ENCODE measurements at regions of chr1 and their contacts with region 1.

Region 1: DNA sequence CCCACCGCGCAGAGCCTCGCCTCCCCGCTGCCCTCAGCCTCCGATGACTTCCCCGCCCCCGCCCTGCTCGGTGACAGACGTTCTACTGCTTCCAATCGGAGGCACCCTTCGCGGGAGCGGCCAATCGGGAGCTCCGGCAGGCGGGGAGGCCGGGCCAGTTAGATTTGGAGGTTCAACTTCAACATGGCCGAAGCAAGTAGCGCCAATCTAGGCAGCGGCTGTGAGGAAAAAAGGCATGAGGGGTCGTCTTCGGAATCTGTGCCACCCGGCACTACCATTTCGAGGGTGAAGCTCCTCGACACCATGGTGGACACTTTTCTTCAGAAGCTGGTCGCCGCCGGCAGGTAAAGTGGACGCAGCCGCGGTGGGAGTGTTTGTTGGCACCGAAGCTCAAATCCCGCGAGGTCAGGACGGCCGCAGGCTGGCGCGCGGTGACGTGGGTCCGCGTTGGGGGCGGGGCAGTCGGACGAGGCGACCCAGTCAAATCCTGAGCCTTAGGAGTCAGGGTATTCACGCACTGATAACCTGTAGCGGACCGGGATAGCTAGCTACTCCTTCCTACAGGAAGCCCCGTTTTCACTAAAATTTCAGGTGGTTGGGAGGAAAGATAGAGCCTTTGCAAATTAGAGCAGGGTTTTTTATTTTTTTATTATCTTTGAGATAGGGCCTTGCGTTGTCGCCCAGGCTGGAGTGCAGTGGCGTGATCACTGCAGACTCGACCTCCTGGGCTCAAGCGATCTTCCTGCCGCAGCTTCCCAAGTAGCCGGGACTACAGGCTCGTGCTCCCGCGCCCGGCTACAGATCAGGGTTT is at the start of gene PMF1:
- DNase-seq: peak; percentile 98
- ATAC-seq: peak; percentile 97
- H3K4me3 Mint-ChIP-seq: peak within 1 kb of the TSS; percentile 96
- H3K27ac Mint-ChIP-seq: peak within 1 kb of the TSS; percentile 98
- H3K4me1 Mint-ChIP-seq: peaks cover 30% of the 10 kb centered on the region
- H3K27me3 Mint-ChIP-seq: no peaks in the 10 kb centered on the region
- total RNA-seq, gene PMF1: 66.2 to 71.2 TPM

Region 2: GRCh38 chr1:156146020-156146768 is 66.8 kb before region 1 on chr1:
- POLR2A ChIA-PET with region 1: interaction called, 79 read pairs
- DNase-seq: peak; percentile 49
- ATAC-seq: peak; percentile 82
- H3K4me3 Mint-ChIP-seq: peak overlapping the region; percentile 83
- H3K27ac Mint-ChIP-seq: peak overlapping the region; percentile 89
- H3K4me1 Mint-ChIP-seq: peaks cover 33% of the 10 kb centered on the region
- H3K27me3 Mint-ChIP-seq: peaks cover 2% of the 10 kb centered on the region

Region 3: DNA sequence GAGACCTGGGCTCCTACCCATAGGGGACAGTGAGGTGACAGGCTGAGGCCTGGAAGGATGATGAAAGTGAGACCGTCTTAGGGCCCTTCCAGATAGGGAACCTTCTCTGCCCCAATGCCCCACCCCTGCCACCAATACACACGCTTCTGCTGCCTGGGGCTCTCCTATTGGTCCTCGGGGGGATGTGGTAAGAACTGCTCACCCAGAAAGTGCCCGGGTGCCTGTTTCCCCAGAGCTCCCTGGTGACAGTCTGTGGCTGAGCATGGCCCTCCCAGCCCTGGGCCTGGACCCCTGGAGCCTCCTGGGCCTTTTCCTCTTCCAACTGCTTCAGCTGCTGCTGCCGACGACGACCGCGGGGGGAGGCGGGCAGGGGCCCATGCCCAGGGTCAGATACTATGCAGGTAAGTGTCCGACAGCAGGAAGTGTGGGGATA is 58.7 kb before region 1 on chr1:
- POLR2A ChIA-PET with region 1: interaction called, 79 read pairs
- DNase-seq: peak; percentile 53
- ATAC-seq: peak; percentile 91
- H3K4me3 Mint-ChIP-seq: peak overlapping the region; percentile 88
- H3K27ac Mint-ChIP-seq: peak overlapping the region; percentile 65
- H3K4me1 Mint-ChIP-seq: peaks cover 51% of the 10 kb centered on the region
- H3K27me3 Mint-ChIP-seq: no peaks in the 10 kb centered on the region

Region 4: DNA sequence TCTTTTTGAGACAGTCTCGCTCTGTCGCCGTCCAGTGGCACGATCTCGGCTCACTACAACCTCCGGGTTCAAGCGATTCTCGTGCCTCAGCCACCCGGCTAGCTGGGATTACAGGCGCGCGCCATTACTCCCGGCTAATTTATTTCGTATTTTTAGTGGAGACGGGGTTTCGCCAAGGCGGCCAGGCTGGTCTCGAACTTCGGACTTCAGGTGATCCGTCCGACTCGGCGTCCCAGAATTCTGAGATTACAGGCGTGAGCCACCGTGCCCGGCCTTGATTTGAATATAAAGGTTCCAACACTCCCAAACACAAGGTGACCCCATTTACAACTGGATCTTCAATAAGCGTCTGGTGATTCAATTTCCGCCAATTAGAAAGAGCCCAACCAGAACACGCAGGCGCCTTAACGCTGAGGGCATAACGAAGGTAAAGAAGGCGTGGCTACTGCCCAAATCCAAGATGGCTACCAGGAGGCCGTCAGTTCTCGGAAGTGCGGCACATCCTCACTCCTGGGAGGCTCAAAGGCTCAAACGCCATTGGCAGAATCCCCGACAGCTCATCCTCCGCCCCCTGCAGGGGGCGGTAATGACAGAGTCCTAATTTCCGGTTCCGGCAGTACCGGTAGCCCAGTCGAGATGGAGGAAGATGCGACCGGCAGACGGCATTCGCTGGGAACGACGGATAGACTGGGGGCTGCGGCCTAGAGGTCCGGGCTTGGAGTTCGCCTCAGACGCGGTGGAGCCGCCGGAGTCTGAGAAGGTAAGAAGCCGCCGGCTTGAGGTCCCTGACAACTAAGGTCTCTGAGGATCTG is 19.3 kb before region 1 on chr1 and contains the start of gene SLC25A44:
- POLR2A ChIA-PET with region 1: interaction called, 53 read pairs
- DNase-seq: peak; percentile 94
- ATAC-seq: peak; percentile 97
- H3K4me3 Mint-ChIP-seq: peak within 1 kb of the TSS; percentile 91
- H3K27ac Mint-ChIP-seq: peak within 1 kb of the TSS; percentile 86
- H3K4me1 Mint-ChIP-seq: peaks cover 42% of the 10 kb centered on the region
- H3K27me3 Mint-ChIP-seq: no peaks in the 10 kb centered on the region
- total RNA-seq, gene SLC25A44: 30.9 to 35.3 TPM

Region 5: DNA sequence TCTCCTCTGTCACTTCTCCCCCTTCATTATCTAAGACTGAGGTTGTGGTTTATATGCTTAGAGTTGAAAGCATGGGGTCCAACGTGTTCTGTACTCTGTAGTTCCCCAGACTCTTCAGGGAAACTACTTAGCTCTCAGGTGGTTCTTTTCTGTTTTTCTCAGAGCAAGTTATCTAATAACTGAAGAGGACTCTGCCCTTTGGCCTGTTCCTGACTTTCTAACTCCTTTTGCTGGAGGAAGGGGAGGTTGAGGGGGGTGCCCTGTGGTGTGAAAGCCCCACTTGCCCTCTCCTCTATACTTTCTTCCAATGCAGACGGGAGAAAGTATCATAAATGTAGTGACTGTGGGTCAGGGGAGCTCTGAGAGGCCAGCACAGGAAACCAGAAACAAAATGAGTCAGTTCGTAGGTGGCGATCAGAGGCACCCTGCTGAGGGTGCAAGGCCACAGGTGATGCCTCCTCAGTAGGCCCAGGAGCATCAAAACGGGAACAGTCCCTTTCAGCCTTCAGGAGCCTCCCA is 14.1 kb before region 1 on chr1:
- POLR2A ChIA-PET with region 1: interaction called, 53 read pairs
- DNase-seq: peak; percentile 37
- ATAC-seq: peak; percentile 65
- H3K4me3 Mint-ChIP-seq: peak overlapping the region; percentile 65
- H3K27ac Mint-ChIP-seq: peak overlapping the region; percentile 92
- H3K4me1 Mint-ChIP-seq: peaks cover 49% of the 10 kb centered on the region
- H3K27me3 Mint-ChIP-seq: no peaks in the 10 kb centered on the region

Region 6: DNA sequence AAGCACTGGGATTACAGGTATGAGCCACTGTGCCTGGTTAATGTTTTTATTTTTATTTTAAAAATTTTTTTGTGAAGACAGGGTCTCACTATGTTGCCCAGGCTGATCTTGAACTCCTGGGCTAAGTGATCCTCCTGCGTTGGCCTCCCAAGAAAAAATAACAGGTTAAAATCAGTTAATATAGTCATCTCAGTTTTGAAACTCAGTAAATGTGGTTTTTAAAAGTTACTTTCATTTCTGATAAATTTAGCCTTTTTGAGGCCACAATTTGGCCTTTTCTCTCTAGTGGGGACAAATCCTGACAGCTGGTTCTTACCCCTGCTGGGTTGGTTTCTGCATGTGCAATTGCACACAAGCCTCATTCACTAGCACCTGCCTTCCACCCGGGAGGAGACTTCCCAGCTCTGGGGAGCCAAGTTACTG is 13.1 kb after region 1 on chr1:
- POLR2A ChIA-PET with region 1: interaction called, 55 read pairs
- DNase-seq: no peak
- ATAC-seq: no peak
- H3K4me3 Mint-ChIP-seq: peak overlapping the region; percentile 20
- H3K27ac Mint-ChIP-seq: peak overlapping the region; percentile 69
- H3K4me1 Mint-ChIP-seq: peaks cover 42% of the 10 kb centered on the region
- H3K27me3 Mint-ChIP-seq: no peaks in the 10 kb centered on the region

Region 7: DNA sequence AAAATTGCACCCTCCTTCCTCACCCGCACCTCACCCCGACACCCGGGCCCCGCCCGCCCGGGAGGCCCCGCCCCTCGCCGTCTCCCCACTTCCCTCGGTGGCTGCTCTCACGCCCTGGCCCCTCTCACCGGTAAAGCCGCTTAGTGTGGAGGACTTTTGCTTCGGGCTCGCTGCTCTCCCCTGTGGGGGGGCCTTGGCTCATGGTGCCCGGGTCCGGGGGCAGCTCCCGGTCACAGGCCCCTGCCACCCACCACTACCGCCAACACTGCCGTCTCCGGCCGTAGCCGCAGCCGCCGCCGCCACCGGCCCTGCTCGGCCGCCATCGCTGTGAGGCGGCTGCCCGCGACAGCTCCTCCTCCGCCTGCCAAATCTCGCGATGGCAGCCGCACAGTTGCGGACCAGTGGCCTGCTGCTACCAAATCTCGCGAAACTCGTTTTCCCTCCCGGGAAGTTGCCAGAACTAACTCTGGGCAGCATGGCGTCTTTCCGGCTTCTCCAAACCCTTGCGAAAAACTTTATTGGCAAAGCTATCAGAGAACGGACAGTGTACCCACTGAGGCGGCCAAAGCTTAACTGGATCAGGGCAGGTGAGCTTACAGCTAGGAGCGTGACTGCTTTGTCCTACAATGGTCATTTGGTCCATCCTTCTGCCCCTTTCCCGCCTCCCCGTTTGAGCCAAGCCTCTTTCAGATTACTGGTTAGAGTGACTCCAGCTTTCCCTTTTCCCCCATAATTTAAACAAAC is 69.6 kb after region 1 on chr1 and contains the start of gene SMG5:
- POLR2A ChIA-PET with region 1: interaction called, 17 read pairs
- DNase-seq: peak; percentile 95
- ATAC-seq: peak; percentile 91
- H3K4me3 Mint-ChIP-seq: peak within 1 kb of the TSS; percentile 94
- H3K27ac Mint-ChIP-seq: peak within 1 kb of the TSS; percentile 95
- H3K4me1 Mint-ChIP-seq: peaks cover 27% of the 10 kb centered on the region
- H3K27me3 Mint-ChIP-seq: no peaks in the 10 kb centered on the region
- total RNA-seq, gene SMG5: 72.3 to 76.4 TPM

Measured in activated naive CD8-positive, alpha-beta T cell treated with anti-CD3 and anti-CD28 coated beads, Interleukin-2, amount 10 ng/mL, durations not matched to agents 7 days and 5 days (primary cell).